ENCODE measurements at regions of chr14 and their contacts with region 1.

Region 1: GRCh38 chr14:50109342-50109741 is 7.0 kb downstream of the VCPKMT start:
- DNase-seq: peak; percentile 23
- ATAC-seq: peak; percentile 65
- H3K4me3 ChIP-seq: no peak overlapping the region
- H3K27ac ChIP-seq: no peak overlapping the region
- H3K4me1 ChIP-seq: peaks cover 1% of the 10 kb centered on the region
- H3K27me3 ChIP-seq: no peaks in the 10 kb centered on the region
- CTCF ChIP-seq: no peak
- EP300 ChIP-seq: no peak
- POLR2A ChIP-seq: no peak
- RAD21 ChIP-seq: no peak

Region 2: GRCh38 chr14:49879683-49880204 is 229.6 kb before region 1 on chr14:
- CTCF ChIA-PET with region 1: interaction called, 13 read pairs
- POLR2A ChIA-PET with region 1: no interaction called
- in situ Hi-C with region 1: no loop called
- intact Hi-C with region 1: loop called (anchors 1 kb)
- DNase-seq: peak; percentile 80
- ATAC-seq: peak; percentile 95
- H3K4me3 ChIP-seq: peak overlapping the region in 1 of 3 experiments; percentile 44; a peak in 2 of 6 replicates
- H3K27ac ChIP-seq: no peak overlapping the region
- H3K4me1 ChIP-seq: peaks cover 32% of the 10 kb centered on the region
- H3K27me3 ChIP-seq: no peaks in the 10 kb centered on the region; a peak in 1 of 5 replicates
- CTCF ChIP-seq: peak; percentile 87
- EP300 ChIP-seq: no peak
- POLR2A ChIP-seq: no peak
- RAD21 ChIP-seq: peak; percentile 72

Region 3: DNA sequence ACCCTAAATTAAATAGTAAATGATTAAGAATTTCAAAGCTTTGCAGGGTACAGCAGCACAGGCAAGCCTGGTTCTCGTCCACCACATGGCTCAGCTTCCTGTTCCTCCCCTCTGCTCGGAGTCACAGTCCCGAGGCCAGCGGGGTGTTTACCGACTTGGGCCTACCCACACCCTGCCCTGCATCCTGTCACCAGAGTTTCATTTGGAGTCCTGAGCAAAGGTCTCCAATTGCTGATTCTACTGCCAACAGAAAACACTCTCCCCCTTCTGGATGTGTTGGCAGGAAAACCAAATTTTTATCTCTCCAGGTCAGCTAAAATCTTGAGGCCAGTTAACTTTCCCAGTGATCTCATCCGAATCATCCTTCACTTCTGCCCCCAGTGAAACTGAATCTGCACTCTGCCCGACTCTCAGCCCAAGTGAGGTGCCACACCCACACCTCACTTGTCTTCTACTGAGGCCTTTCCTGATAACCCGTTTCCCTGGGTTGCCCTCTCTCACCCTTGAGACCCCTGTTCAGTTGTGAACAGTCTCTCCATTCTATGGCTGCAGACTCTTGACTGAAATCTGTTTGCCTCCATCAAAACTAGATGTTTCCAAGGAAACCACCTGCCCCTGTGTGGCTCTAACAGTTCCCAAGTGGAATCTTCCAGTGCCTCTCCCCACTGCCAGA is 64.2 kb before region 1 on chr14:
- CTCF ChIA-PET with region 1: no interaction called
- POLR2A ChIA-PET with region 1: no interaction called
- in situ Hi-C with region 1: no loop called
- intact Hi-C with region 1: loop called (anchors 10 kb)
- DNase-seq: peak; percentile 82
- ATAC-seq: peak; percentile 92
- H3K4me3 ChIP-seq: no peak overlapping the region
- H3K27ac ChIP-seq: peak overlapping the region; percentile 65
- H3K4me1 ChIP-seq: peaks cover 75% of the 10 kb centered on the region
- H3K27me3 ChIP-seq: no peaks in the 10 kb centered on the region; a peak in 1 of 5 replicates
- CTCF ChIP-seq: peak; percentile 42
- EP300 ChIP-seq: 0 out of 4 replicates have a peak, but pooled peaks of 1 of the 2 experiments have one; percentile 19
- POLR2A ChIP-seq: no peak
- RAD21 ChIP-seq: no peak

Measured in HepG2 (cell line).